ENCODE measurements at regions of chr12 and their contacts with region 1.

Region 1: DNA sequence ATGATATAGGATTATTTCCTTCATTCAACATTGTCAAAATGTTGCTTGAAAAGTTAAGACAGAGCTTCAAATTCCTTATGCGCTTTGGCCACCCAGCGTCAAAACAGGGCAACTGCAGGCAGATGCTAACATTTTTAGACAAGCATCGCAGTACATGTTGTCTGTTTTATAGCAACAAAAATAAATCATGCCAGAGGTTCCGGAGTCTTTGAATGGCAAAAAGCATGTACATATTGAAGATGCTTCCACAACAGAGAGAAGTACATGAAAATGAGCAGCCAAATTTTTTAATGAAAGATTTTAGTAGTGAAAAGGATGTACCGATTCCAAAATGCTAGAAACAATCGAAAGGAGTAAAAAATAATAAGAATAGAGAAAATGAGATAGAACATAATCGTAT is 49.8 kb upstream of the USP15 start:
- DNase-seq: peak; percentile 40
- H3K4me3 ChIP-seq: peak overlapping the region in 1 of 2 experiments; percentile 27; a peak in 1 of 4 replicates
- H3K27ac ChIP-seq: no peak overlapping the region
- H3K4me1 ChIP-seq: no peaks in the 10 kb centered on the region
- H3K27me3 ChIP-seq: no peaks in the 10 kb centered on the region
- CTCF ChIP-seq: peak; percentile 84
- EP300 ChIP-seq: no peak
- RAD21 ChIP-seq: peak; percentile 53

Region 2: GRCh38 chr12:62192180-62192902 is 18.1 kb before region 1 on chr12:
- CTCF ChIA-PET with region 1: interaction called, 38 read pairs
- POLR2A ChIA-PET with region 1: no interaction called
- DNase-seq: peak; percentile 77
- H3K4me3 ChIP-seq: peak overlapping the region; percentile 33 to 54
- H3K27ac ChIP-seq: no peak overlapping the region
- H3K4me1 ChIP-seq: peaks cover 0 to 7% of the 10 kb centered on the region in 2 experiments; a peak in 1 of 4 replicates
- H3K27me3 ChIP-seq: peaks cover 31% of the 10 kb centered on the region
- CTCF ChIP-seq: peak; percentile 80
- EP300 ChIP-seq: no peak
- RAD21 ChIP-seq: peak; percentile 90

Region 3: DNA sequence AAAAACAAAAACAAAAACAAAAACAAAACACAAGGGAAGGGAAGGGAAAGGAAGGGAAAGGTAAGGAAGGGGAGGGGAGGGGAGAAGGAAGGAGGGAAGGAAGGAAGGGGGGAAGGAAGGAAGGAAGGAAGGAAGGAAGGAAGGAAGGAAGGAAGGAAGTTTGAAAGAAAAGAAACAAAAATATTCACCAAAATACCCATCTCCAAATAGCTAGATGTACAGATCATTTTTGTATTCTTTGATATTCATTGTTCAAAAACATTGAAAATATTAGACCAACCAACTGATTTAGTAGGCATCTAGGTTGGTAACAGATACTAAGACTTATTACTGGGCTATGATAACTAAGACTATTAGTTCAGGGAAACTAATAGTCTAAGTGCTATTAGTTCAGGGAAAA is 10.7 kb after region 1 on chr12:
- CTCF ChIA-PET with region 1: interaction called, 16 read pairs
- POLR2A ChIA-PET with region 1: no interaction called
- DNase-seq: no peak
- H3K4me3 ChIP-seq: no peak overlapping the region
- H3K27ac ChIP-seq: no peak overlapping the region
- H3K4me1 ChIP-seq: no peaks in the 10 kb centered on the region
- H3K27me3 ChIP-seq: no peaks in the 10 kb centered on the region; the same call in 1 of the 2 replicates
- CTCF ChIP-seq: no peak
- EP300 ChIP-seq: no peak
- RAD21 ChIP-seq: no peak

Region 4: GRCh38 chr12:62247281-62248045 is 37.0 kb after region 1 on chr12:
- CTCF ChIA-PET with region 1: interaction called, 14 read pairs
- POLR2A ChIA-PET with region 1: no interaction called
- DNase-seq: no peak
- H3K4me3 ChIP-seq: no peak overlapping the region
- H3K27ac ChIP-seq: no peak overlapping the region
- H3K4me1 ChIP-seq: no peaks in the 10 kb centered on the region
- H3K27me3 ChIP-seq: no peaks in the 10 kb centered on the region
- CTCF ChIP-seq: no peak
- EP300 ChIP-seq: no peak
- RAD21 ChIP-seq: no peak

Region 5: DNA sequence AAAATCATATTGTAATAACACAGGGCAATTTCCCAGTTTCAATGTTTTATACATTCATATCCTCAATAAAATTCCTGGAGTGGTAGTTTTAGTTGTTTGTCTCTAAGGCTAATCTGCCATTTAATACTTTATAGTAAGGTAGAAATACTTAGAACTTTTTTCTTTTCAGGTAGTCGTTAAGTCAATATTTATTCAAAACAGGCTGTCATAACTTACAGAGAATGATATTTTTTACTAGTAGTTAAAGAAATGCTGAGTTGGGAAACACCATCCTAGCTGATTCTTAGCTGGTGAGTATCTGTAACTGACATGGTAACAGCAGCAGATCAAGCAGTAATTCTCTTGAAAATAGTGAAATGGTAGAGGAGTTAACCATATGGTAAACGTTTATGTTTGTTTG is 289.6 kb after region 1 on chr12:
- CTCF ChIA-PET with region 1: no interaction called
- POLR2A ChIA-PET with region 1: no interaction called
- DNase-seq: no peak
- H3K4me3 ChIP-seq: no peak overlapping the region
- H3K27ac ChIP-seq: no peak overlapping the region
- H3K4me1 ChIP-seq: no peaks in the 10 kb centered on the region
- H3K27me3 ChIP-seq: no peaks in the 10 kb centered on the region
- CTCF ChIP-seq: no peak
- EP300 ChIP-seq: no peak
- RAD21 ChIP-seq: no peak

Measured in SK-N-SH (cell line).